ENCODE measurements at regions of chr18 and their contacts with region 1.

Region 1: GRCh38 chr18:12990967-12991838 is at the start of gene CEP192:
- DNase-seq: peak; percentile 98
- ATAC-seq: peak; percentile 90
- H3K4me3 Mint-ChIP-seq: peak within 1 kb of the TSS; percentile 87
- H3K27ac Mint-ChIP-seq: peak within 1 kb of the TSS; percentile 93
- H3K4me1 Mint-ChIP-seq: peaks cover 21% of the 10 kb centered on the region
- H3K27me3 Mint-ChIP-seq: no peaks in the 10 kb centered on the region
- total RNA-seq, gene CEP192: 36.0 to 39.3 TPM

Region 2: DNA sequence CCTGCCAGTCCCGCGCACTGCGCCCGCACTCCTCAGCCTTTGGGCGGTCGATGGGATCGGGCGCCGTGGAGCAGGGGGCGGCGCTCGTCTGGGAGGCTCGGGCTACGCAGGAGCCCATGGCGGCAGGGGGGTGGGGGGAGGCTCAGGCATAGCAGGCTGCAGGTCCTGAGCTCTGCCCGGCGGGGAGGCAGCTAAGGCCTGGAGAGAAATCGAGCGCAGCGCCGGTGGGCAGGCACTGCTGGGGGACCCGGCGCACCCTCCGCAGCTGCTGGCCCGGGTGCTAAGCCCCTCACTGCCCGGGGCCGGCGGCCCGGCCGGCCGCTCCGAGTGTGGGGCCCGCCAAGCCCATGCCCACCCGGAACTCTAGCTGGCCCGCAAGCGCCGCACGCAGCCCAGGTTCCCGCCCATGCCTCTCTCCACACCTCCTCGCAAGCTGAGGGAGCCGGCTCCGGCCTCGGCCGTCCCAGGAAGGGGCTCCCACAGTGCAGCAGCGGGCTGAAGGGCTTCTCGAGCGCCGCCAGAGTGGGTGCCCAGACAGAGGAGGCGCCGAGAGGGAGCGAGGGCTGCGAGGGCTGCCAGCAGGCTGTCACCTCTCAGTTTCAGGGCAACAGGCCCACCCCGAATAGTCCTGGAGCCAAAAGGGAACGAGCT is 214.3 kb before region 1 on chr18:
- CTCF ChIA-PET with region 1: no interaction called
- POLR2A ChIA-PET with region 1: no interaction called
- intact Hi-C with region 1: loop called in 1 of 2 experiments (anchors 1 kb)
- DNase-seq: no peak
- ATAC-seq: no peak
- H3K4me3 Mint-ChIP-seq: no peak overlapping the region
- H3K27ac Mint-ChIP-seq: no peak overlapping the region
- H3K4me1 Mint-ChIP-seq: peaks cover 16% of the 10 kb centered on the region
- H3K27me3 Mint-ChIP-seq: no peaks in the 10 kb centered on the region

Region 3: DNA sequence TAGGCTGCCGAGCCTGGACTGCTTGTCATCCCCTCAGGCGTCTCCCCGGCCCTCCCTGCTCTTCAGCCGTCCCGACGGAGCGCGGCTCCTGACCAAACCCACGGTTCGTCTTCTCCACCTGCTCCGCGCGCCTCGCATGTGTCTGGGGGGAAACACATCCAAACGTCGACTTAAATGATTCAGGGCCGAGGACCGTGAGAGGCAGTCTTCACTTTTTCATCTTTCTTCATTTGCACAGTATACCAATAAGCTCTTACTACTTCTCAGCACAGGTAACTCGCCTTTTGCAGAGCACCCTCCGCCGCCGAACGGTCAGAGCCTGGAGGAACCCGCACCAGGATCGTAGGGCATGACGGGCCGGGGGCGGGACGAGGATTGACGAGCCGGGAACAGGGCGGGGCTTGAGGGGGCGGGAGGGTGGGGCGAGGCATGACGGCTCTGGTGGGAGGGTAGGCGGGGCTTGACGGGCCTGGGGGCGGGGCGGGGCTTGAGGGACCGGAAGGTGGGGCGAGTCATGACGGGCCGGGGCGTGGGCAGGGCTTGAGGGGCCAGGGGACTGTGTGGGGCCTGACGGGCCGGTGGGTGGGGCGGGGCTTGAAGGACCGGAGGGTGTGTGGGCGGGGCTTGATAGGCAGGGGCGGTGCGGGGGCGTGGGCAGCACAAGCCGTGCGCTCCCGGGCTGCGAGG is 43.7 kb before region 1 on chr18 and contains the start of gene SEH1L:
- CTCF ChIA-PET with region 1: interaction called, 3 read pairs
- POLR2A ChIA-PET with region 1: interaction called, 11 read pairs
- intact Hi-C with region 1: loop called (anchors 1 kb)
- DNase-seq: peak; percentile 100
- ATAC-seq: peak; percentile 86
- H3K4me3 Mint-ChIP-seq: peak within 1 kb of the TSS; percentile 89
- H3K27ac Mint-ChIP-seq: peak within 1 kb of the TSS; percentile 97
- H3K4me1 Mint-ChIP-seq: peaks cover 34% of the 10 kb centered on the region
- H3K27me3 Mint-ChIP-seq: no peaks in the 10 kb centered on the region
- total RNA-seq, gene SEH1L: 100 to 107 TPM